Calu3 (cell line): ENCODE measurements at regions of chr5 and their contacts with region 1.

Region 1: GRCh38 chr5:150801117-150801927 is 22.8 kb downstream of the SMIM3 start:
- DNase-seq: peak; percentile 65
- H3K4me3 Mint-ChIP-seq: peak overlapping the region; percentile 63
- H3K27ac Mint-ChIP-seq: peak overlapping the region; percentile 2
- H3K4me1 Mint-ChIP-seq: no peaks in the 10 kb centered on the region
- H3K27me3 Mint-ChIP-seq: peaks cover 23% of the 10 kb centered on the region
- CTCF ChIP-seq: peak; percentile 60

Region 2: GRCh38 chr5:150497274-150497988 is 303.9 kb before region 1 on chr5:
- CTCF ChIA-PET with region 1: no interaction called
- intact Hi-C with region 1: no loop called
- DNase-seq: peak; percentile 82
- H3K4me3 Mint-ChIP-seq: no peak overlapping the region
- H3K27ac Mint-ChIP-seq: no peak overlapping the region
- H3K4me1 Mint-ChIP-seq: peaks cover 53% of the 10 kb centered on the region
- H3K27me3 Mint-ChIP-seq: no peaks in the 10 kb centered on the region
- CTCF ChIP-seq: no peak

Region 3: DNA sequence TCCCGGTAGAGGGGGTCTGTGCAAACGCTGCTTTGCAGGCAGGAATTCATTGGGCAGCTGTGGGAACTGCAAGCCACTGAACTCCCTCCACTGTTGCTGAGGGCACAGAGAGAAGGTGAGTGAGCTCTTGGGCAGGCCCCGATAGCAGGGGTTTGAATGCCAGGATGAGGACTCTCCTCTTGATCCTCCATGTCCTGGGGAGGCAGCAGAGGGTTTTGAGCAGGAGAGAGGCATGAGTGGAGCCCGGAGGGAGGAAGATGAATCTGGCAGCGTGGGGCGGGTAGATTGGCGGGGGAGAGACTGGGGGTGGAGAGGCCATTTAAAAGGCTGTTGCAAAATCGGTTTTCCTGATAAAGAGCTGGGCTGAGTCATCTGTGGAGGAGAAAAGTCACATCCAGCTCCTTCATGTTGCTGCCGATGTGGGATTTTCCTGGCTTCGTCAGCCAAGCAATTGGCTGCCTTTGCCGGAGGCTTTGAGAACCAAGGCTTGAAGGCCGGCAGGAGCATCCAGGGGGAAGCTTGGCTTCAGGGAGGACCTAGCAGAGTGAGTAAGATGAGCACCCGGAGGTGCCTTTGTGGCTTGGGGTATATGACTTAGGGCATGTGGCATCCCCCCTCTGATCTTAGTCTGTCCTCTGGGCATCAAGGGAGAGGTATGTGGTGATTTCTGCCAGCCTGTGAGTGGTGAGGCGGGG is 160.9 kb before region 1 on chr5 and contains the start of gene SYNPO:
- CTCF ChIA-PET with region 1: no interaction called
- intact Hi-C with region 1: no loop called
- DNase-seq: peak; percentile 49
- H3K4me3 Mint-ChIP-seq: peak within 1 kb of the TSS; percentile 19
- H3K27ac Mint-ChIP-seq: peak within 1 kb of the TSS; percentile 58
- H3K4me1 Mint-ChIP-seq: peaks cover 74% of the 10 kb centered on the region
- H3K27me3 Mint-ChIP-seq: no peaks in the 10 kb centered on the region
- CTCF ChIP-seq: no peak
- total RNA-seq, gene SYNPO: 0.92 and 2.5 TPM in 2 replicates

Region 4: DNA sequence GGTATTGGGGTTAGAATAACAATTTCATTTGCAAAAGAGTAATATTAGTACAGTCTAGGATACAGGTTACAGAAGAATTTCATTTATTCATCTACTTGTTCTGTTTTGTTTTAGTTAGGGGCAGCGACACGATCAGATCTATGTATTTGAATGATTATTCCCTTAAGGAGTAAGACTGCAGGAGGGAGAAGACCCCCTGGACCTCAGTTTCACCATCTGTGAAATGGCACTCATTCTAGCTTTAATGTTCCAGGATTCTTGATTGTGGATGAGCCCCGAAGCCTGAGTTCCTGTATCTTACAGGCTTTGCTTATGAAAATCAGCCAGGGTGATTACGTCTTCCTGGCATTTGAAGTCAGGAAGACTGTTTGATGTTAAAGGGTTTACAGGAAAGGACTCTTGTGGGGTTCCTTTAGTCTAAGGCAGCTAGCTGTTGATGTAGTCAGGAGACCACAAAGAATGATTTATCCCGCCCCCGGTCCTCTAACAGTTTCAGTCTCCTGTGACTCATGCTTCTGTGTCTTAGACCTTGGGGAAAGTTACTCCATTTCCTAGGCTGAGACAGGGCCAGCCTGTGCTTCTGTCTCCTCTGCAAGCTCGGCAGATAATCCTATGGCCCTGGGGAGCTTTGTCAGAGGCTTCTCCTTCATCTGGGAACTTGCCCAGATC is 11.2 kb before region 1 on chr5:
- CTCF ChIA-PET with region 1: interaction called, 13 read pairs
- intact Hi-C with region 1: no loop called
- DNase-seq: peak; percentile 51
- H3K4me3 Mint-ChIP-seq: peak overlapping the region; percentile 28
- H3K27ac Mint-ChIP-seq: peak overlapping the region; percentile 7
- H3K4me1 Mint-ChIP-seq: peaks cover 29% of the 10 kb centered on the region
- H3K27me3 Mint-ChIP-seq: no peaks in the 10 kb centered on the region
- CTCF ChIP-seq: no peak

Region 5: DNA sequence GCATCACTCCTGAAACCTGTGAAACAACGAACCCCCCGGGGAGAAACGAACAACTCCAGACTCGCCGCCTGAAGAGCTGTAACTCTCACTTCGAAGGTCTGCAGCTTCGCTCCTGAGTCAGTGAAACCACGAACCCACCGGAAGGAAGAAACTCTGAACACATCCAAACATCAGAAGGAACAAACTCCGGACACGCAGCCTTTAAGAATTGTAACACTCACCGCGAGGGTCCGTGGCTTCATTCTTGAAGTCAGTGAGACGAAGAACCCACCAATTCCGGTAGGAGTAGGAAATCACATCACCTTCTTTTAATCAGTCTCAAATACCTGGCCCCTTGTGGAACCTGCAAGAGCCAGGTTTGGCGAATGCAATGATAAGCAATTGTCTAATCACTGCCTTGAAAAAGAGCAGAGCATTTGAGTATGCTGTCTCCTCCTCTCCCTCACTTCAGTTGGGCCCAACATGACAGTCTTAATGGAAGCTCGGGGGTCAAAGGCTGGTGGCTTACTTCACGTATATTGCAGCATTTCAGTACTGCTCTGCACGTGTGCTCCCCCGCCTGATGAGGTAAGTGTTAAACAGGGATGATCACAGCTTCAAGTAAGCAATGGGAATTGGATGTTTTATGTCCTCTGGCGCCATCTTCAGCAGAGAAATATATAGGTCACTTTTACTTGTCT is 45.5 kb after region 1 on chr5:
- CTCF ChIA-PET with region 1: interaction called, 28 read pairs
- intact Hi-C with region 1: loop called (anchors 1 kb)
- DNase-seq: peak; percentile 53
- H3K4me3 Mint-ChIP-seq: no peak overlapping the region
- H3K27ac Mint-ChIP-seq: no peak overlapping the region
- H3K4me1 Mint-ChIP-seq: no peaks in the 10 kb centered on the region
- H3K27me3 Mint-ChIP-seq: peaks cover 66% of the 10 kb centered on the region
- CTCF ChIP-seq: peak; percentile 50

Region 6: GRCh38 chr5:150989695-150990094 is 188.4 kb after region 1 on chr5:
- CTCF ChIA-PET with region 1: no interaction called
- intact Hi-C with region 1: loop called (anchors 5 kb)
- DNase-seq: no peak
- H3K4me3 Mint-ChIP-seq: no peak overlapping the region
- H3K27ac Mint-ChIP-seq: no peak overlapping the region
- H3K4me1 Mint-ChIP-seq: no peaks in the 10 kb centered on the region
- H3K27me3 Mint-ChIP-seq: peaks cover 14% of the 10 kb centered on the region
- CTCF ChIP-seq: peak; percentile 9

Region 7: GRCh38 chr5:151164686-151165392 is 363.5 kb after region 1 on chr5:
- CTCF ChIA-PET with region 1: interaction called, 13 read pairs
- intact Hi-C with region 1: loop called (anchors 1 kb)
- DNase-seq: peak; percentile 85
- H3K4me3 Mint-ChIP-seq: no peak overlapping the region
- H3K27ac Mint-ChIP-seq: no peak overlapping the region
- H3K4me1 Mint-ChIP-seq: no peaks in the 10 kb centered on the region
- H3K27me3 Mint-ChIP-seq: peaks cover 7% of the 10 kb centered on the region
- CTCF ChIP-seq: peak; percentile 93

Region 8: GRCh38 chr5:151202381-151203139 is 401.2 kb after region 1 on chr5:
- CTCF ChIA-PET with region 1: no interaction called
- intact Hi-C with region 1: loop called (anchors 10 kb)
- DNase-seq: no peak
- H3K4me3 Mint-ChIP-seq: no peak overlapping the region
- H3K27ac Mint-ChIP-seq: no peak overlapping the region
- H3K4me1 Mint-ChIP-seq: no peaks in the 10 kb centered on the region
- H3K27me3 Mint-ChIP-seq: peaks cover 29% of the 10 kb centered on the region
- CTCF ChIP-seq: no peak

Region 9: DNA sequence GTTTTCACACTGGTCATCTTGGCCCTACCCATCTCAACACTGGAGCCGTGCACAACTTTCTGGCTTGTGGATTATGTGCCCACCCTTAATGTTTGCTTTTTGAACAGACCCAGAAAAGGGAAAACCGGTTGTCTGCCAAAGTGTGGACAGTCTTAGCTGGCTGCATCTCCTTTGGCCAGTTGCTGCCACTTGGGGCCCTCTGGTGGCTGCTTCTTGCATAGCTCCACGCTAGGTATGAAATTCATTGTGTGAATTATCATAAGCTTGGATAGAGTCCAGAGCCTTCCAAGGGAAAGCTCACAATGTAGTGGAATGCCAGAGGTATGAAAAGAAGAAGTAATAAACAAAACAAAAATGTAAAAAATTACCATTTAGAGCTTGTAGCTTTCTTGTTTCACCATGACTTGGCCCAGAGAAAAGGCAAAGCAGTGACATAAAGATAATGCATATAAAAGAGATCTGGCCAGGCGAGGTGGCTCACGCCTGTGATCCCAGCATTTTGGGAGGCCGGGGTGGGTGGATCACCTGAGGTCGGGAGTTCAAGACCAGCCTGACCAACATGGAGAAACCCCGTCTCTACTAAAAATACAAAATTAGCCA is 514.8 kb after region 1 on chr5:
- CTCF ChIA-PET with region 1: no interaction called
- intact Hi-C with region 1: loop called (anchors 5 kb)
- DNase-seq: peak; percentile 88
- H3K4me3 Mint-ChIP-seq: no peak overlapping the region
- H3K27ac Mint-ChIP-seq: no peak overlapping the region
- H3K4me1 Mint-ChIP-seq: no peaks in the 10 kb centered on the region
- H3K27me3 Mint-ChIP-seq: peaks cover 45% of the 10 kb centered on the region
- CTCF ChIP-seq: peak; percentile 92

Region 10: GRCh38 chr5:151406322-151406947 is 605.1 kb after region 1 on chr5:
- CTCF ChIA-PET with region 1: no interaction called
- intact Hi-C with region 1: no loop called
- DNase-seq: peak; percentile 16
- H3K4me3 Mint-ChIP-seq: no peak overlapping the region
- H3K27ac Mint-ChIP-seq: no peak overlapping the region
- H3K4me1 Mint-ChIP-seq: no peaks in the 10 kb centered on the region
- H3K27me3 Mint-ChIP-seq: peaks cover 30% of the 10 kb centered on the region
- CTCF ChIP-seq: peak; percentile 45